Posterior cingulate gyrus (tissue), 11 donors: ENCODE measurements at regions of chr4 and their contacts with region 1.

Region 1: DNA sequence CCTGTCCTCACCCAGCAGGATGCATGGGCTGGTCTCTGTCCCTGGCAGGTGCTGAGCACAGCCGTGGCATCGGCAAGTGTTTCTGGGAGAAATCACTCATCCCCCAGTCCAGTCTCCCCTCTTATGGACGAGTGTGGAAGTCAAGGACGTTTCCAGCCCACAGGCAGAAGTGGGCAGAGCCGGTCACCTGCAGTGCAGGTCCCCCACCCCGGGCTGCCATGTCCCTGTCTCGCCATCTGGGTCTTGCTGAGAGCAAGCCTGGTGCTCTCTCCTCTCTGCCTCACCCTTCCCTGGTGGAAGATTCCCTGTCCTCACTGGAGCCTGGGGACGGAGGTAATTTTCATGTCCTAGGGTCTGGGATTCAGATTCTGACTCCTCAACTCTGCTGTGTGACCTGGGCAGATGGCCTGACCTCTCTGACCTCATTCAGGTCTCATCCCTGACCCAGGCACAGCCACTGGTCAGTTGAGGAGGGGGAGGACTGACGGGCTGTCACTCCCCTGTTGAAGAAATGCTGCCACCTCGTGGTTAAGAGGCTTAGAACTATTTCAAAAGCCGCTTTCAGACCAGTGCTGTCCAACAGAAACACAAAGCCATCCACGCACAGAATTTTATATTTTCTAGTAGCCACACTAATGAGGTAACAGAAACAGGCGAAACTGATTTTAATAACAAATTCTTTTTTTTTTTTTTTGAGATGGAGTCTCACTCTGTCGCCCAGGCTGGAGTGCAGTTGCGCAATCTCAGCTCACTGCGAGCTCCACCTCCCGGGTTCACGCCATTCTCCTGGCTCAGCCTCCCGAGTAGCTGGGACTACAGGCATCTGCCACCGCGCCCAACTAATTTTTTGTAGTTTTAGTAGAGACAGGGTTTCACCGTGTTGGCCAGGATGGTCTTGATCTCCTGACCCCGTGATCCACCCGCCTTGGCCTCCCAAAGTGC is 1.8 kb downstream of the CPZ start:
- DNase-seq: peak in 6 of 10 donors; percentile 44 to 82 (median 54)

Region 2: DNA sequence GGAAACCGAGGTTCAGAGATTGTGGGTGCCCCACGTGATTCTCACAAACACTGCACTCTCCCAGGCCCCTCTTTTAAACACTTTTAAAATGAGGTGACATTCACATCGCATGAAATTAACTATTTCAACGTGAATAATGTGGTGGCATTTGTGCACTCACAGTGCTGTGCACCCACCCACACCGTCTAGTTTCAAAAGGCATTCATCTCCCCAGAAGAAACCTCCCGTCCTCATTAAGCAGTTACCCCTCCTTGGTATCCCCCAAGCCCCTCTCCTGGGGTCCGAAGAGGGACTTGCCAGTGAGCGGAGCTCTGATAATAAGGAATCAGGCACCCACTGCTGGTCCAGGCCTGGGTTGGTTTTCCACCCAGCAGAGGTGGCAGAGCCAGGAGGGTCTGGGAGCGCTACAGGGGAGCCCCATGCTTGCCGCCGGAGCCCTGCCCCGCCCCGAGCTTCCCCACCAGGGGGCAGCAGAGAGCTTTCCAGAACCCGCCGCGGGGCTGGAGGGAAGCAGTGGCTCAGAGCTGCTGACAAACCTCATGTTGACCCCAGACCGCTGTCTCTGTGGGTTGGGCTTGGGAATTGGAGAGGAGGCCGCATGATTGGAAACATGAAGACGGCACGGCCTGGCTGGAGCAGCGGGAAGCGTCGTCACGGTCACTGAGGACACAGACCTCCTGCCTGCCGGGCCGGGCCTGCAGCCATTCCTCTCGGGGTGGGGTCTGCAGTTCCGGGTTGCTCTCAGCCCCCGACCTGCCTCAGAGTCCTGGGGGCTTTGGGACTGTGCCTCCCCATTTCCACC is 352.3 kb before region 1 on chr4:
- intact Hi-C with region 1: loop called (anchors 5 kb)
- DNase-seq: peak; percentile 52 to 97 (median 86)

Region 3: GRCh38 chr4:8468746-8469535 is 125.4 kb before region 1 on chr4:
- intact Hi-C with region 1: loop called (anchors 1 kb)
- DNase-seq: peak; percentile 56 to 95 (median 74)